PC-9 (cell line): ENCODE measurements at regions of chr2 and their contacts with region 1.

Region 1: DNA sequence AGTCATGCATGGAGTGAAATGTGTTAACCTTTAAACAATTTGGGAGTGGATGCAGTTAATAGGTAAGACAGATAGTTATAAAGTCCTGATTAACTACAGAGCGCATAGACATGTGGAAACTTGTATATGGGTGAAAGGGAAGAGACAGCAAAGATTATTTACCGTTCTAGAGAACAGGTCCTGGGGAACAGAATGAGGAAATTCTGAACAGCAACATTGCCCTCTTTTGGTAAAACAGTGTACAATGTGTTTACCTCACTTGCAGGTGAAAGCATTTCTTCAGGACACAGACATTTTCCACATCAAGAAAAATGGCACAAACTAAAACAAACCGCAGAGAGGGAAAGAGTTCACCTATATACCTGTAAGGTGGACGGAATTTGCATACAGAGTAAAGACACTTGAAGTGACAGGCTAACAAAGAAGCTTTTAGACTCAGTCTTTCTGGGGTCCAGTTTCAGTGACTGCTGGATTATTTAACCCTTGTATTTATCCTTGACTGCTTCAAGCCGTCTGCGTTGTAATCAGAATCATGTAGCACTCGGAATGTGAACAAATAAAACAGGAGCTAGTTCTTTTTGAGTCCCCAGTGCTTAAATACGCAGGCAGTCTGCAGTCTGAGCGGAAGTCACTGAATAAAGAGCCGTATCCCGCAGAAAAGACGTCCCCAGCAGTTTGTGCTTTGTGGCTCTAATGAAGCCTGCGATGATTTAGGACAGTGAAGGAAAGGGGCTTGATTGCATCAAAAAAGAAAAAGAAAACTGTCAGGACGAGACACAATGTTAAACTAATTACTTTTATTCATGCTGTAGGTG is 364.8 kb upstream of the GALNT5 start:
- DNase-seq: peak in 1 of 2 experiments; percentile 59
- H3K4me3 ChIP-seq: peak overlapping the region; percentile 58
- H3K27ac ChIP-seq: peak overlapping the region; percentile 34
- H3K4me1 ChIP-seq: peaks cover 21% of the 10 kb centered on the region
- H3K27me3 ChIP-seq: no peaks in the 10 kb centered on the region
- CTCF ChIP-seq: peak; percentile 65

Region 2: DNA sequence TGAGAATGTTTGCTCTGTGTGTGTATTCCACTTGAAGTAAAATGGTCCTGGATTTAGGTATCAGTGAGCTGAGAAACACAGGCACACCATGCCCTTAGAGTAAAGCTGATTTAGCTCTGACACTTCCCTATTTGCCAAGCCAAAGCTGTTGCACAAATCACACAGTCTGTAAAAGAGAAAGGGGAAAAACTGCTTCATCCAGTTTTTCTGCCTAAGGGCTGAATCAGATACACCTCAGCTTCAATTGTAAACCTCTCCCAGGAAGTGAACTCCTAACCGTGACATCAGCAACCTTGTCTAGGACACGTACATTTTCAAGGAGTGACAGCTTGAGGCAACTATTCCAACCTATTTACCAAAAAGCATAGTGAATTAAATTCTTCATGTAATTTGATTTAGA is 710.5 kb before region 1 on chr2:
- CTCF ChIA-PET with region 1: no interaction called
- POLR2A ChIA-PET with region 1: no interaction called
- intact Hi-C with region 1: loop called (anchors 10 kb)
- DNase-seq: peak; percentile 52 to 96
- H3K4me3 ChIP-seq: peak overlapping the region; percentile 29; the same call in 1 of the 2 replicates
- H3K27ac ChIP-seq: peak overlapping the region; percentile 96
- H3K4me1 ChIP-seq: peaks cover 36% of the 10 kb centered on the region
- H3K27me3 ChIP-seq: no peaks in the 10 kb centered on the region
- CTCF ChIP-seq: no peak

Region 3: GRCh38 chr2:156589381-156590079 is 303.1 kb before region 1 on chr2:
- CTCF ChIA-PET with region 1: no interaction called
- POLR2A ChIA-PET with region 1: no interaction called
- intact Hi-C with region 1: loop called (anchors 5 kb)
- DNase-seq: no peak
- H3K4me3 ChIP-seq: no peak overlapping the region
- H3K27ac ChIP-seq: no peak overlapping the region
- H3K4me1 ChIP-seq: no peaks in the 10 kb centered on the region
- H3K27me3 ChIP-seq: no peaks in the 10 kb centered on the region
- CTCF ChIP-seq: peak; percentile 65

Region 4: GRCh38 chr2:157055660-157056199 is 163.1 kb after region 1 on chr2:
- CTCF ChIA-PET with region 1: interaction called, 3 read pairs
- POLR2A ChIA-PET with region 1: no interaction called
- intact Hi-C with region 1: loop called (anchors 1 kb)
- DNase-seq: peak in 1 of 2 experiments; percentile 38
- H3K4me3 ChIP-seq: no peak overlapping the region
- H3K27ac ChIP-seq: no peak overlapping the region
- H3K4me1 ChIP-seq: no peaks in the 10 kb centered on the region; the same call in 1 of the 2 replicates
- H3K27me3 ChIP-seq: no peaks in the 10 kb centered on the region
- CTCF ChIP-seq: peak; percentile 69